ENCODE measurements at regions of chr18 and their contacts with region 1.

Region 1: DNA sequence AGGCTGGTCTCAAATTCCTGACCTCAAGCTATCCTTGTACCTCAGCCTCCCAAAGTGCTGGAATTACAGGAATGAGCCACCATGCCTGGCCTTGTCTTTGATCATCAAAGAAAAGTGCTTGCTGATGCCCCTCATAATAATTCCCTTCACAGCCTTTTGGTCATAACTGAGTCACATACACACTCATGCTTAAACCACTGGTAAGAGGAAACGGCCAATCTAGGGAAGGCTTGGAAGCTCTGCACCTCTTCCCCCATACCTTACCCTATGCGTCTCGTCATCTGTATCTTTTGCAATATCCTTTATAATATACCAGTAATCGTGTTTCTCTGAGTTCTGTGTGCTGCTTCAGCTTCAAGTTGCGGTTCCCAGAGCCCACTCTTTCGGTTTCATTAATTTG is 4.8 kb upstream of the RNF138 start:
- DNase-seq: no peak
- H3K4me3 Mint-ChIP-seq: no peak overlapping the region
- H3K27ac Mint-ChIP-seq: no peak overlapping the region
- H3K4me1 Mint-ChIP-seq: peaks cover 28% of the 10 kb centered on the region
- H3K27me3 Mint-ChIP-seq: no peaks in the 10 kb centered on the region

Region 2: DNA sequence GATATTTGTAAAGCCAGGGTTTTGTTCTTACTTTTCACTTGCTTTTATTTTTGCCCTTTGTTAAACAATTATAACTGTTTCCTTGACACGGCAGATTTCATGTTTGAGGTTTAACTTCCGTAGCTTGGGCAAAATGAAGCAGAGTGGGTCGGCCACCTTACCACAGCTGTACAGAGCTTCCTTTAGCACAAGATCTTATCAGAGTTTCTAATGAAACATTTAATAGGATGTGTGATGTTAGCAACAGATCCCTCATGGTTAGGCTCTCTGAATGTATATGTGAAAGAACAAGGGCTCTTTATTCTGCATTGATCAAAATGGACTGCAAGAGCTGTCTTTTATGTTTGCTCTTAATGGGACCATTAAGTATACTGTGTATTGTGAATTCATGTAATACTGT is 45.9 kb before region 1 on chr18:
- CTCF ChIA-PET with region 1: no interaction called
- intact Hi-C with region 1: loop called (anchors 2 kb)
- DNase-seq: peak; percentile 49
- H3K4me3 Mint-ChIP-seq: peak overlapping the region; percentile 54
- H3K27ac Mint-ChIP-seq: peak overlapping the region; percentile 82
- H3K4me1 Mint-ChIP-seq: peaks cover 36% of the 10 kb centered on the region
- H3K27me3 Mint-ChIP-seq: no peaks in the 10 kb centered on the region

Region 3: DNA sequence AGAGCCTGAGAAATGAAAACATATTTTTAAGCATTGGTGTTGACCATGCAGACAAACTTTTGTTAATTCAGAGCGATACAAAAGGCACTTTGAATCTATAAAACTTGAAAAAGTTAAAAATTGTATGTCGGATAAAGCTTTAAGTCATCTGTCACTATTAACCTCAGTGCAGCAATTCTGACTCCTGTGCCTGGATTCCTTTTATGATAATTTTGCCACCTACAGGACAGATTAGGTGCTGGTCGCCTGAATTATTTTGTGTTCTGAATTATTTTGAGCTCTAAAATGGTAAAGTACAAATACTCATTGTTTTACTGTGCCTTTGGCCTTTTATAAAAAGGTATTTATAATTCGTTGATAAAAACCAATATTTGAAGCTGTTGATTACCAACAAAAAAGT is 14.5 kb before region 1 on chr18:
- CTCF ChIA-PET with region 1: interaction called, 10 read pairs
- intact Hi-C with region 1: loop called (anchors 1 kb)
- DNase-seq: no peak
- H3K4me3 Mint-ChIP-seq: no peak overlapping the region
- H3K27ac Mint-ChIP-seq: no peak overlapping the region
- H3K4me1 Mint-ChIP-seq: peaks cover 8% of the 10 kb centered on the region
- H3K27me3 Mint-ChIP-seq: no peaks in the 10 kb centered on the region